IMR-90 (cell line): ENCODE measurements at regions of chr3 and their contacts with region 1.

Region 1: GRCh38 chr3:125401402-125401801 is 26.3 kb upstream of the ZNF148 start:
- DNase-seq: peak; percentile 48
- ATAC-seq: peak; percentile 74
- H3K4me3 ChIP-seq: no peak overlapping the region
- H3K27ac ChIP-seq: no peak overlapping the region
- H3K4me1 ChIP-seq: peaks cover 7% of the 10 kb centered on the region; the same call in 1 of the 2 replicates
- H3K27me3 ChIP-seq: no peaks in the 10 kb centered on the region
- CTCF ChIP-seq: no peak
- POLR2A ChIP-seq: no peak
- RAD21 ChIP-seq: no peak

Region 2: DNA sequence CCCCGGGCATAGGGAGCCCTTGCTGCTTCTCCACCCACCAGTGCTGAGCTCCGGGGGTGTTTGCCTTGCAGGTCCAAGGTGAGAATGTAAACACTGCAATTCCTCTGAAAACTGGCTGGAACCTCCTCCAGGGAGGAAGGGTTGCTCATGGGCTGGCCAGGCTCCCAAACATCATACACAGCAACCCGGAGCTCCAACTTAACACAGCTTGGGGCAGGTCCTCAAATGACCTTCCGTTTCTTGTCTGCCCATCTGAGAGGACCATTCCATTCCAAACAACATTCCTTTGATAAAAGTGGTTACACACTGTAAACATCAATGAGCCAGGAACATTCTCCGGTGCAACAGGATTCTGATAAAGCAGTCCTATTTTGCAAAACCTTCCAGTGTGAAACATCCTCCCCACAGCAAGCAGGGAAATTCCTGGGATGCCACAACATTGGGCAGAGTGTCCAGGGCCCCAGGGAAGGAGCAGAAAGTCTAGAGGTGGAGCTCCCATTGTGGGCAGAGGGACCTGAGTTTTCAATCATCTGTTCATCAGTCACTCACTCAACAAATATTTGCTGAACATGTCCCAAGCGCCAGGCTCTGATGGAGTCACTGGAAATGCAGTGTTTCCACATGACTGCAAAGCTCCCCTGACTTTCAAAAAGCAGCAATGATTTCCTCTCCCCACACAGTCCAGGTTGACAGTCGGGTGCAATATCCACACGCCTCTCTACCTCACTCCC is 338.3 kb before region 1 on chr3:
- CTCF ChIA-PET with region 1: no interaction called
- POLR2A ChIA-PET with region 1: interaction called, 11 read pairs
- dilution Hi-C with region 1: no loop called
- in situ Hi-C with region 1: no loop called
- intact Hi-C with region 1: no loop called
- DNase-seq: peak; percentile 97
- ATAC-seq: peak; percentile 86
- H3K4me3 ChIP-seq: no peak overlapping the region
- H3K27ac ChIP-seq: peak overlapping the region; percentile 93
- H3K4me1 ChIP-seq: peaks cover 30% of the 10 kb centered on the region
- H3K27me3 ChIP-seq: no peaks in the 10 kb centered on the region
- CTCF ChIP-seq: no peak
- POLR2A ChIP-seq: no peak
- RAD21 ChIP-seq: no peak

Region 3: DNA sequence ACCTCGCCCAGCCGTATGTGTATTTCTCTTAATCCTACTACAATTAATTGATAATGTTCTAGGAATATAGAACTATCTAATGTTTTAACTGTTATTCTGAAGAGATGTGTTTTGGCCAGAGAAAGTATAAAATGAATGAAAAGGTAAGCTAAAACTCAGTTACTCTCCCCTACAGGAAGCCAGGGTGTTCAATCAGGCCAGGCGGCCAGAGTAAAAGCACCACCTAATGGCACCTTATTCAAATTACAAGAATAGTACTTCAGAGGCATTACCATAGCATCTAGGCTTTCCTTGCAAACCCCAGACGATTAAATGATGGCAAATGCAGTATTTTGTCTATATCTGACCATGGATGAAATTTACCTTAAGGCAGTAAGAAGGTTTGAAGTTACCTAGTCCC is 199.2 kb before region 1 on chr3:
- CTCF ChIA-PET with region 1: no interaction called
- POLR2A ChIA-PET with region 1: no interaction called
- dilution Hi-C with region 1: no loop called
- in situ Hi-C with region 1: no loop called
- intact Hi-C with region 1: no loop called
- DNase-seq: peak; percentile 25
- ATAC-seq: peak; percentile 67
- H3K4me3 ChIP-seq: no peak overlapping the region
- H3K27ac ChIP-seq: no peak overlapping the region
- H3K4me1 ChIP-seq: no peaks in the 10 kb centered on the region
- H3K27me3 ChIP-seq: 0 out of 2 replicates have a peak, but pooled peaks cover 2% of the 10 kb centered on the region
- CTCF ChIP-seq: peak; percentile 42
- POLR2A ChIP-seq: no peak
- RAD21 ChIP-seq: peak; percentile 71

Region 4: GRCh38 chr3:125386811-125387210 is 14.6 kb before region 1 on chr3:
- CTCF ChIA-PET with region 1: no interaction called
- POLR2A ChIA-PET with region 1: no interaction called
- dilution Hi-C with region 1: no loop called
- in situ Hi-C with region 1: no loop called
- intact Hi-C with region 1: loop called (anchors 2 kb)
- DNase-seq: peak; percentile 84
- ATAC-seq: peak; percentile 91
- H3K4me3 ChIP-seq: no peak overlapping the region
- H3K27ac ChIP-seq: no peak overlapping the region
- H3K4me1 ChIP-seq: peaks cover 4% of the 10 kb centered on the region
- H3K27me3 ChIP-seq: no peaks in the 10 kb centered on the region
- CTCF ChIP-seq: no peak
- POLR2A ChIP-seq: no peak
- RAD21 ChIP-seq: no peak